Psoas muscle (tissue), 8 donors: ENCODE measurements at regions of chr6 and their contacts with region 1.

Region 1: DNA sequence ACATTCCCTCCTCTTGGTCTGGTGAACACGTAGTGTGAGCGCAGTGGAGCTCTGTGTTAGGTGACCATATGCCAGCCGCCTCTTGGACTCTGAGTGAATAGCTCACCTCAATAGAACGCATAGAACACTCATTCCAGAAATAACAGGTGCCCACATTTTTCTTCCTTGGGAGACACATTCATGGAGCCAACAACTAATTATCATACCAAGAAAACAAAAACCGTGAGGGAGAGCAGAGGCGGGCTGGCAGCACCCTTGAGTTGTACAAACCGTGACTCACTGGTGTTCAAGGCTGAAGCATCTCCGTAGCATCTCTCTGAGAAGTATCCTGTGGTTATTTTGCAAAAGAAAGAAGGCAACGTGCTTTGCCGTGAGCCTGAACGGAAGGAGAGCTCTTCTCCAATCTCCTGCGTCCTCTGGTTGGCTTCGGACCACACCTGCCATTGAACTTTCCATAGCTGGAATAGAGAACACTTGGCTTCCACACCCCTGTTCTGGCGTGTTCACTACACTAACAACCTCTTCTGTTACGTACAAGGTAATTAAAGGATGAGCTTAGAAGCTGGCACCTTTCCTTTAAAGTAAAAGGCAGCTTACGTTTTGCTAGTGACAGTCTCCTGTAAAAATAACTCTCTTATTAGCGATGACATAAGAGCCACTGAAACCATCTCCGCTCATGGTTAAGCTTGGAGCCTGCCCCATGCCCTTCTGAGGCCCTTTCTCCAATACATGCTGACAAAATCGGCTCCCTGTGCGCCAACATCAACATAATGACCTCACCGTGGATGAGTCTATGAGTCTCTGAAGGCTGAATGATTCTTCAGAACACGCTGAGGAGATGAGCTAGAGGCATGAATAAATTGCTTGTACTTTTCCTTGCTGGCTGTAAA is 30.2 kb upstream of the SGK1 start:
- DNase-seq: peak; percentile 72 to 75
- ATAC-seq: peak; percentile 78 to 81 (median 79)
- H3K4me3 ChIP-seq: peak overlapping the region; percentile 48
- H3K27ac ChIP-seq: peak overlapping the region; percentile 92
- H3K4me1 ChIP-seq: peaks cover 37% of the 10 kb centered on the region
- H3K27me3 ChIP-seq: no peaks in the 10 kb centered on the region
- CTCF ChIP-seq: no peak

Region 2: DNA sequence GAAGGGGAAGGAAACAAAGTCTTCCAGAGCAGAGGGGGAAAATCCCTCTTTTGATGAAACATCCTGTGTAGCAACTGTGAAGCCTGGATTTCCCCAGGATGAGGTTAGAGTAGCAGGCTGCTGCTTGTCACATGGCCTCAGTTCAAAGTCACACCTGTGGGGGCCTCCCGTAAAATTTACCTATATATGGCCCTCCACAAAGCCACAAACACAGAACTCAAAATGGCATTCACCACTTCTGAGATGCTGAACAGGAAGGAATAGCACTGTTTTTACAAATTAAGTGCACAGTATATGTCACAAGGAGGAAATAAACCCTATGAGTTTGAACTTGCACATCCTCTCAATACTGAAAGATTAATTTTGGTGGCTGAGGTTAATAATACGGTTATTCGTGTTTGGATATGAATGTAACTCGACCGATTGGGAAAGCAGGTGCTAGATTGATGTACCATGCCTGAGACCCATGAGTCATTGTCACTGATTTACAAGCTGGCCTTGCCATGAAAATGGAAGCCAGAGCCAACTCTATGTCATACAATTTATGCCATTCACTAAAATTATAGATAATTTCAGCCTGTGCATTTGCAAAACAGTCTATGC is 100.8 kb before region 1 on chr6:
- intact Hi-C with region 1: loop called in 1 of 2 experiments (anchors 2 kb)
- DNase-seq: no peak
- ATAC-seq: peak; percentile 91 to 96 (median 93)
- H3K4me3 ChIP-seq: no peak overlapping the region
- H3K27ac ChIP-seq: peak overlapping the region; percentile 83
- H3K4me1 ChIP-seq: peaks cover 31% of the 10 kb centered on the region
- H3K27me3 ChIP-seq: no peaks in the 10 kb centered on the region
- CTCF ChIP-seq: no peak

Region 3: DNA sequence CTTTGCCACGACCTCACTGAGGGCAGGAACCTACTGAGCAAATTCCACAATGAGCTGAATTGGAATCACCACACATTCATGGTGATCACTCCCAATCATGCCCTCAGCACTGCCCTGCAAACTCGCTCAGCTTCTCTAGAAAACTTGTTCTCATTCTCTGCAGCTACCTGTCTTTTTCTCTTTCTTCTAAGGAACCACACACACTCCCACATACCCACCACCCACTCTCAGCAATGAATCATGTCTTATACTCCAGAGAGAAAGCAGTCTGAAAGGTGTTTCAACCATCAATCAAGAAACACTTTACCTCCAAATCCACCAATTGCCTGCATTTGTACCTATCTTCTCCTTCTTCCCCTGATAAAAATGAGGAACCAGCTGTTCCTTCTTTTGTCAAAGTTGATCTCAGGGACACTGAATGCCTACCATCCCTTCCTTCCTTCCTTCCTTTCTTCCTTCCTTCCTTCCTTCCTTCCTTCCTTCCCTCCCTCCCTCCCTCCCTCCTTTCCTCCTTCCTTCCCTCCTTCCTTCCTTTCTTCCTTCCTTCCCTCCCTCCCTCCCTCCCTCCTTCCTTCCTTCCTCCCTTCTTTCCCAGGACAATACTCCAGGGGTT is 54.3 kb after region 1 on chr6:
- intact Hi-C with region 1: loop called in 1 of 2 experiments (anchors 5 kb)
- DNase-seq: no peak
- ATAC-seq: no peak
- H3K4me3 ChIP-seq: no peak overlapping the region
- H3K27ac ChIP-seq: peak overlapping the region; percentile 54
- H3K4me1 ChIP-seq: peaks cover 13% of the 10 kb centered on the region
- H3K27me3 ChIP-seq: no peaks in the 10 kb centered on the region
- CTCF ChIP-seq: no peak